ENCODE measurements at regions of chr6 and their contacts with region 1.

Region 1: GRCh38 chr6:157314705-157315321 is 8.5 kb downstream of the TMEM242 start:
- DNase-seq: no peak

Region 2: DNA sequence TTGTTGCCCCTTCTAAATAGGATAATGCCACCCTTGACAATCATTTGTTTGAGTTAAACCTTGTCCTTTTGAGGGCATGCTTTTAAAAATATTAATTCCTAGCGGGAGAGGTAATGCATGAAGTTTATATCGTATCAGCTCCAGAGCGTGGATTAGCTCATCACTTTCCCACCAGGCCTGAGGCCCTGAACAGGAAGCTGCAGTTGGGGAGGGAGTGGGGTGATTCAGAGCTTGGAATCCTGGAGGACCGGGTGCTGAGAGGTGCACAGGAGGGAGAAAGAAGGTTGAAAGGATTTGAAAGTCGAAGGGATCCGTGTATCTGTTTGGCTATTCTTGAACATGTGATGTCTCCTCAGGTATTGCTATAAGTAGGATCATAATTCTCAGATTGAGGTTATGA is 91.2 kb after region 1 on chr6:
- intact Hi-C with region 1: no loop called
- DNase-seq: no peak

Region 3: DNA sequence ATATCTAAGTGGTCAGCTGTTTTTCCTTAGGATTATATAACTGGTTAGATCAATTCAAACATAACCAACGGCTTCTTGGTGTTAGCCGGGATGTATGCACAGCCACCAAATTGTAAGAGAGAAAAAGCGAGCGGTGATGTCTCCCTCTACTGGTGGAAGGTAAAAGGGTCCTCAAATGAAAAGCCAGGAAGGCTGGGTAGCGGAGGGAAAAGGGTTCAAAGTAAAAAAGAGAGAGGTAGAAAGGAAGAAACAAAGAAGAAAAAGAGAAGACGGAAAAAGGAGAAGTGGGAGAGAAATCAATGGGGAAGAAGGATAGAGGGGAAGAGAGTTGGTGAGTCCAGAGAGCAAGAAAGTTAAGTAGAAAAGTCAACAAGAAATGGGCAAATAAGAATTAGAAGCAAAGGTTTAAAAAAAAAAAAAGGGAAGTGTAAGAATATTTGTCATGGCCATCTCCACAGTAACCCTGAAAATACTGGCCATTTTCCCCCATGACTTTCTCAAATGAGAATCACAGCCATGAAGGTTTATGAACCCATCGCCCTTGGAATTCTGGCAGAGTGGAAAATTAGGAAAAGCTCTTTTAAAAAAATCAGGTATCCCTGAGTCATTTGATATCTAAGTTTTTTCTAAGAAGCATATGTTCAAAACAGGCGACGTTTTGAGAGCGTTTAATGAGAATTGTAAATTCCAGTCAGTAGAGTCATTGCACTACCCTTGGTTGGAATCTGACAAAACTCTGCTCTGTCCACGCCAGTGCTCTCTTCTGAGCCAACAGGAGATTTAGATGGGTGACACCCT is 352.6 kb after region 1 on chr6:
- intact Hi-C with region 1: loop called (anchors 2 kb)
- DNase-seq: peak in 6 of 10 donors; percentile 42 to 87 (median 60)